Astrocyte of the cerebellum (primary cell): ENCODE measurements at regions of chr12 and their contacts with region 1.

Region 1: DNA sequence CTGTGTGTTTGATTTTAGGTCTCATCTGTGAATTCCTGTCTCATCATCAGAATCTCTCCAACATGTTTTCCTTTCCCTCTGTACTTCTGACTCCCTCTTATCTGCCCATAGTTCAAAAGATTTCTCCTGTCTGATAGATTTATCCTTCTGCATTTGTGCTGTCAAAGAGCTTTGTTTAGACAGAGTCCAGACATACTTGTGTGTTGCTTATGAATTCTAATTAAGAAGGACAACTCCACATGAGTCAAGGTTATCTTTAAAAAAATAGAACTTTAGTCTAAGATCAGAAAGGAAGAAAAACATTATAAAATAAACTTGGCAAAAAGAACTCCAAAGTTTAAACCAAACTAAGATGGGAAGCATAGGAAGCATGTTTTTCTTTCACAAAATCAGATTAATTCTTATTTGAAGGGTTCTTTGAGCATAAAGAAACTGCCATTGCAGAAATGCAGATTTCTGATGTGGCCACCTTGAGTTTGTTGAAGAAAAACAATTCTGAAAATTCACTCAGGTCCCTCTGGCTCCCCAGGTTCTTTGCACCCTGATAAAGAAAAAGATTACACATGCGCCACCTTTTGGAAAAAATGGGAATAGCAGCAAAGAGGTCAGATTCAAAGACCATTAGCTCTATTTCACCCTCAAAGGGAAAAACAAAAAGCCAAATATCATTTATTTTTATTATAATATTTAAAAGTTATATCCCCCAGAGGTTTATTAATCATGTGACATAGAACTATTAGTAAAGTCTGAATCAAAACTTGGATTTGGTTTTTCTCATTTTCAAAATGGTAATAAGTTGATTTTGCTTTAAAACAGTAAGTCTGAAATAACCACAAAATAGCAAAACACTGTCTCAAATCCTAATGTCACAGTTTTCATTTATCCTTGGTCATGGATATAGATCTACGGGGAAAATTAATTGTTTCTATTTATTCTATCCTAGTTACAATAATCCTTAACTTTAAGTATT is 143.7 kb upstream of the DCN start:
- DNase-seq: peak; percentile 56
- H3K4me3 ChIP-seq: no peak overlapping the region
- CTCF ChIP-seq: peak; percentile 78

Region 2: DNA sequence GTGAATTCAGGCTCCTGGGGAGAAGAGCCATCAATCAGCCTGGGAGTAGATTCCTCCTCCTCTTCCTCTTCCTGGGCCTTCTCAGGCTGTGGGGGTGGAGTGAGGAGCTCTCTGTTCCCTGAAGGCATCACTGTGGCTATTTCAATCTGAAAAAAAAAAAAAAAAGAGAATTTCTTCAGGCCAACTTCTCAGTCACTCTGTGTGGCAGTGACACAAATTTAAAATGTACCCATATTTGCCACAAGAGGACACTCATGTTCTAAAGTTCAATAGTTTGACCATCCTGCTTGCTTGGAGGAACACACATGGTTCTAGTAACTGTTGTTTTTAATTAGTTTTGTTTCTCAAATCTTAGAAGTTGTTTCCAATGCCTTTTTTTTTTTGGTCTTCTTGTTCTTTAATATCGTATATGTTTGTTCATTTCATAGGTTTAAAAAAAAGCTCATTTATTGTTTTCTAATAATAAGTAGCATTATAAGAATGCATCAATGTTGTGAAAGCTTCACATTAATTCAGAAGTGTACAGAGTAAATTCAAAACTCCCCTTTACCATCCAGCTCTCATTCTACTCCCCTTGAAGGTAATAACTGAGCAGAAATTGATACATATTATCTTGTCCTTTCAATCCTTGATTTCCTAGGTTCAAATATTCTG is 348.1 kb before region 1 on chr12:
- in situ Hi-C with region 1: loop called (anchors 25 kb)
- DNase-seq: peak; percentile 62
- H3K4me3 ChIP-seq: no peak overlapping the region
- CTCF ChIP-seq: peak; percentile 68

Region 3: GRCh38 chr12:91406920-91407341 is 80.6 kb after region 1 on chr12:
- in situ Hi-C with region 1: no loop called
- DNase-seq: no peak
- H3K4me3 ChIP-seq: no peak overlapping the region
- CTCF ChIP-seq: no peak

Region 4: DNA sequence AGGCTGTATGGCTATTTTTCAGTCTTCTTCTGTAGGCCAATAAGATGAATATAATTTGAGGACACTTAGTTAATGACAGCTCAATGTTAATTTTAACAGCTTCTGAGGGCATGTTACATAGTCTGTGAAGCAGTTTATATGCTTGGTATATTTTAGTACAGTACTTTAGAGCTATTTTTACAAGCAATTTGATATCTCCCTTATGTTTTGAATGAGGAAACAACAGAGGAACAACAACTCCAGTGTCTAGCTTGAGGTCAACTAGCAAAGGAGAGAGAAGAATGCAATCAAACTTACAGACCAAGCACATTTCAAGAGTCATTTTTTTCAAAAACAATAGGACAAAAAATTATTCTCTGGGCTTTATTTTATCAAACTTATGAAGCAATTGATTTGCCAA is 325.4 kb after region 1 on chr12:
- in situ Hi-C with region 1: no loop called
- DNase-seq: no peak
- H3K4me3 ChIP-seq: no peak overlapping the region
- CTCF ChIP-seq: no peak